ENCODE measurements at regions of chr16 and their contacts with region 1.

Region 1: GRCh38 chr16:61887903-61888302 is 148.3 kb downstream of the CDH8 start:
- DNase-seq: peak; percentile 22 to 35 (median 34)
- ATAC-seq: no peak
- H3K4me3 ChIP-seq: no peak overlapping the region
- H3K27ac ChIP-seq: no peak overlapping the region
- H3K4me1 ChIP-seq: no peaks in the 10 kb centered on the region
- H3K27me3 ChIP-seq: no peaks in the 10 kb centered on the region

Region 2: GRCh38 chr16:61820398-61820797 is 67.5 kb before region 1 on chr16:
- intact Hi-C with region 1: loop called in 1 of 4 experiments (anchors 10 kb)
- DNase-seq: no peak
- ATAC-seq: no peak
- H3K4me3 ChIP-seq: no peak overlapping the region
- H3K27ac ChIP-seq: no peak overlapping the region
- H3K4me1 ChIP-seq: no peaks in the 10 kb centered on the region
- H3K27me3 ChIP-seq: no peaks in the 10 kb centered on the region

Measured in right cardiac atrium (tissue), 5 donors.